Activated CD4-positive, alpha-beta T cell treated with anti-CD3 and anti-CD28 coated beads for 36 hours (primary cell): ENCODE measurements at regions of chr6 and their contacts with region 1.

Region 1: DNA sequence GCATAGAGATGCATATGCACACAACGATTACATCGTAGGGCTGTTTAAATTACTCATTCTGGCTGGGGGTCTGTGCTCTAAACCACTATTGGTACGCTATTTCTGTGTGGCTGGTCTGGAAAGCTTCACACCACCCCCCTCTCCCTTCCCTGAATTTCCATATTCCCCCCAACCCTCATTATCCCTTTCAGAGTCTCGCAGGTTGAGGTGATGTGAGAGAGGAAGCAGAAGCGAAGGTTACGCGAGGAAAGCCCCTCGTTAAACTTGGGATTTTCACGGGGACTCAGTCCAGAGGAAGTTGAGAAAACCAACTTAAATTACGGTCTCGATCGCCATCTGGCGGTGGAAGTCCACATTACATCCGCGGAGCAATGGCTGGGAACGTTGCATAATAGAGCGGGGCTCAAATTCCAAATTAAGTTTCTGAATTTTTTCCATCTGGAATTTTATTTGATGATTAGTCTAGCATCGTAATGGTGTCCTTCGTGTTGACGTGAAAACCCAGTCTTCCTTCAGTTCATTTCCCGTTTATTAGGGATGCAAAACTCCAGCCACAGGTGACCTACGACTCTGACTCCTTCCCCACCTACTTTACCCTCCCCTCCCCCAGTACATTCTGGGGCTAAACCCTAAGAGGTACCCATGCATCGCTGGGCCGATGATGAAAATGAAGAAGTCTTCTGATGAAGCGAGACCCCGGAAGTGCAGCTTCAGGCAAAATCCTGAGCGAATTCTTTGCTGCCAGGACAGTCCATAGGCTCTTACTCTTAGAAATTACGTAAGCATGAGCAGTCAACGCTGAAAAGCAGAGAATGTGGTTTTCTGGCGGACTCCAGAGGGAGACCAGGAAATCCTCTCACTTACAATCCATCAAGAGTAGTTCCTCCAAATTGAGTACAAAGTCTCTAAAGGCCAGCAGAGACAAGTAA is 19.7 kb downstream of the HLA-DOB start:
- DNase-seq: peak; percentile 87
- ATAC-seq: peak; percentile 68
- H3K4me3 Mint-ChIP-seq: peak overlapping the region; percentile 54
- H3K27ac Mint-ChIP-seq: peak overlapping the region; percentile 43
- H3K4me1 Mint-ChIP-seq: peaks cover 22% of the 10 kb centered on the region
- H3K27me3 Mint-ChIP-seq: peaks cover 27% of the 10 kb centered on the region

Region 2: DNA sequence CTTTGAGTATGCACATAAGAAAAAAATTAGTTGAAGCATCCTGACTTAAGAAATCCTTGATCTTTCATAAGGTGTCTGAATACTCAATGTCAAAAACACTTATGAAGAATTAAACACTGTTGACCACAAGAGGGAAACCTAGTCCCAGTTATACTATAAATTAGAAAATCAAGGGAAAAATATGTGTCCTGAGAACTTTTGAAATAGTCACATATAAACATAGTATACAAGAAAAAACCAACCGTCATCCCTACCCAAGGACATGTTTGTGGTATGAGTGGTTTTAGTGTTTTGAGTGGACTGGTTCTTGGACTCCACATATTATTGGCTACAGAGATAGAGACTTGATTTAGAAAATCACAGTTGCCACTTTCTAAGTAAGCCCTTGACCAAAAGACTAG is 365.1 kb before region 1 on chr6:
- CTCF ChIA-PET with region 1: interaction called, 4 read pairs
- POLR2A ChIA-PET with region 1: no interaction called
- intact Hi-C with region 1: loop called in 1 of 2 experiments (anchors 5 kb)
- DNase-seq: no peak
- ATAC-seq: no peak
- H3K4me3 Mint-ChIP-seq: no peak overlapping the region
- H3K27ac Mint-ChIP-seq: no peak overlapping the region
- H3K4me1 Mint-ChIP-seq: no peaks in the 10 kb centered on the region
- H3K27me3 Mint-ChIP-seq: peaks cover 12% of the 10 kb centered on the region

Region 3: DNA sequence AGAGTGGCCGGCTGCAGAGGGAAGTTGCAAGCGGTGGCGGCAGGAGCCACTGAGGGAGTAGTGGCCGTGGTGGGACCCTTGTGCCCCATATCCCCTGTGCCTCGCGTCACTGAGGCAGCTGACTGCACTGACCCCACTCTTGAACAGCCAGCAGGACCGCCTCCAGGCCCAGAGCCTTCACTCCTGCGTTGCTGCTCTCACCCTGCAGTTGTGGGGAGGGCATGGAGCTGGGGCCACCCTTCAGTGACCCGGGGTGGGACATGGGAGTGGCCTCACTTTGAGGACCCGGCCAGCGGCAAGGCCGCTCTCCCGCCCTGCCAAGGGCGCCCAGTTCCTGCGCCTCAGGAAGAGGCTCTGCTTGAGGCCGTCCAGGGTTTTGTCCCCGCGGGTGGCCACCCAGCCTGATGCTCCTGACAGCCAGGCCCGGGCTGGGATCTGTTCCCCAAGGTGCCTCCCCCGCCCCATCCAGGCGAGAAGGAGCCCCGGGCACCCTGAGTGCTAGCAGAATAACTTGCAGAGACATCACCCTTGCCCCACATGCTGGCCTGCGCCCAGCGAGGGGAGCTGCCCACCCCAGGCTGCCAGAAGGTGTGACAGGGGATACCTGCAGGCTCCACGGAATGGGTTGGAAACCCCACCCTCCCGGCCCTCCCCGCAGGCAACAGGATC is 313.0 kb before region 1 on chr6:
- CTCF ChIA-PET with region 1: no interaction called
- POLR2A ChIA-PET with region 1: no interaction called
- intact Hi-C with region 1: loop called in 1 of 2 experiments (anchors 1 kb)
- DNase-seq: no peak
- ATAC-seq: no peak
- H3K4me3 Mint-ChIP-seq: no peak overlapping the region
- H3K27ac Mint-ChIP-seq: no peak overlapping the region
- H3K4me1 Mint-ChIP-seq: no peaks in the 10 kb centered on the region
- H3K27me3 Mint-ChIP-seq: peaks cover 6% of the 10 kb centered on the region

Region 4: DNA sequence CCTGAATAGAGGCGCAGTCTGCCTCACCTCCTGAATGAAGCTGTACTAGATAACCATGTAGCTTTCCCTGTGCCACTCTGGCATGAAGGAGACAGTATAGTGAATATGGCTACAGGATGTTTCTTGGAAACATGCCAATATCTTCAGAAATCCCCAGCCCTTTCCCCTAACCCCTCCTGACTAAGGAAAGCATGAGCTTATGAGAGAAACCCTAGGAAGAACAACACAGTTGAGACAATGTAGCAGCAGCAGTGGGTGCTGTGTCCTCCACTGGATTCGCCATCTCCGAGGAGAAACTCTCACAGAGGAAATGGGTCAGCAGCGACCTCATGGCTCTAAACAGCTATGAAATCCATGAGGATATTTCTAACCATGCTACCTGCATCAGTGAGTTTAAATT is 153.2 kb before region 1 on chr6:
- CTCF ChIA-PET with region 1: no interaction called
- POLR2A ChIA-PET with region 1: no interaction called
- intact Hi-C with region 1: no loop called
- DNase-seq: no peak
- ATAC-seq: no peak
- H3K4me3 Mint-ChIP-seq: no peak overlapping the region
- H3K27ac Mint-ChIP-seq: no peak overlapping the region
- H3K4me1 Mint-ChIP-seq: peaks cover 8% of the 10 kb centered on the region
- H3K27me3 Mint-ChIP-seq: no peaks in the 10 kb centered on the region

Region 5: DNA sequence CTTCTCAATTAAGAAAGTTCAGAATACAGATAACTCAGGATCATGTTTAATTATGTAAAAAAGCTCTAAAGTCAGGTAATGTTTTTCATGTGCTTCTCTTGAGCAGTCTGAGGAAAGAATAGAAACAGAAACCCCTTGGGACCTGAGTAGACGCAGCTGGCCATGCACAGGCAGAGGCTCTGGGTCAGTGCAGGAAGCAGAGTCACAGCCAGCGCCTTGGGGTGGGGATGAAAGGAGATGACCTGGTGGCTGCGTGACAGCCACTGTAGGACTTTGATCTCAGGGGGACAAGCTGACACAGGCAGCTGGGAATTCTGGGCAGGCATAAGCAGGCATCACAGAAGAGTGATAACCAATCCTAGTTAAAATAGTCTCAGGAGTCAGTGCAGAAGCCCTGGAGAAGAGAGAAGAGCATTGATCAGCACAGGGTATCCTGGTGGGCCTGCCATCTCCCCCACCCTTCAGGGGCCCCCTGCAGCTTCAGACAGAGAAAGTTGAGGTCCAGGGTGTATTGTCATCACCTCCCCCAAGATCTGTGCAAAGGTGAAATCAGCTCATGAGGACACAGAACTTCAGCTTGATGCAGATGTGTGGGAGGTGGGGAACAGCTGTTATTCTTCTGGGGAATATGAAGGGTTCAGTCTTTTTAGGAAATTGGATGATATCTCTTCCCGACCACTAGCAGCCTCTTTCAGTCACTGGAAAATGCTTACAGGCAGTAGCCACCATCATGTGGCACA is 137.1 kb before region 1 on chr6:
- CTCF ChIA-PET with region 1: no interaction called
- POLR2A ChIA-PET with region 1: no interaction called
- intact Hi-C with region 1: no loop called
- DNase-seq: no peak
- ATAC-seq: no peak
- H3K4me3 Mint-ChIP-seq: no peak overlapping the region
- H3K27ac Mint-ChIP-seq: no peak overlapping the region
- H3K4me1 Mint-ChIP-seq: peaks cover 9% of the 10 kb centered on the region
- H3K27me3 Mint-ChIP-seq: peaks cover 4% of the 10 kb centered on the region

Region 6: DNA sequence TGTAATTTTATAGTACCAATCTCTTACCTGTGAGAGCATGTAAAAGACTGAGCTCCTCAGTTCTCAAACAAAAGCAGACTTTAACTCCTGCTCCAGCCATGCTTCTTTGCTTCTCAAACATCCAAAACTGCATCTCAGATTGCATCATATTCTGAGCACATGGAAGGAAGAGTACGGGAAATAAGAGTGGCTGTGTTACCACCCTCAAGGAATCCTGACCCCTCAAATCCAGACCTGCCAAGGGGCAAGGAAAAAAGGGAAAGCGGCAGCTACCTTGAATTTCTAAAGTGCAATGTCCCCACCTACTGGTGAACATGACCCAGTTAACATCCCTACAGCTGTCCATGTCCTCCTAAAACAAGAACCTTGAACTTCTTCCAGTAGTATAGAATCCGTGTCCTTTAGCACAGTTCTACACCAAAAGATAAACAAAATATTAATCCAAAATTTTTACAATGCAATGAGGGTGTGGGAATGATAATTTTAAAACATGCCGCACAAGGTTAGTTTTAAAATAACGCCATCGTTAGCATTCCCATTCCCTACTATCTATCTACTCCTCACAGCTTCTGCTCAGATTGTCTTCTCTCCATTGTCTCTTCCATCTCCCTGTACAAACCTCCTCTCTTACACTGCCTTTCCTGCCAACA is 96.6 kb before region 1 on chr6:
- CTCF ChIA-PET with region 1: interaction called, 4 read pairs
- POLR2A ChIA-PET with region 1: no interaction called
- intact Hi-C with region 1: loop called (anchors 1 to 5 kb)
- DNase-seq: peak; percentile 28
- ATAC-seq: peak; percentile 42
- H3K4me3 Mint-ChIP-seq: no peak overlapping the region
- H3K27ac Mint-ChIP-seq: no peak overlapping the region
- H3K4me1 Mint-ChIP-seq: no peaks in the 10 kb centered on the region
- H3K27me3 Mint-ChIP-seq: peaks cover 29% of the 10 kb centered on the region

Region 7: DNA sequence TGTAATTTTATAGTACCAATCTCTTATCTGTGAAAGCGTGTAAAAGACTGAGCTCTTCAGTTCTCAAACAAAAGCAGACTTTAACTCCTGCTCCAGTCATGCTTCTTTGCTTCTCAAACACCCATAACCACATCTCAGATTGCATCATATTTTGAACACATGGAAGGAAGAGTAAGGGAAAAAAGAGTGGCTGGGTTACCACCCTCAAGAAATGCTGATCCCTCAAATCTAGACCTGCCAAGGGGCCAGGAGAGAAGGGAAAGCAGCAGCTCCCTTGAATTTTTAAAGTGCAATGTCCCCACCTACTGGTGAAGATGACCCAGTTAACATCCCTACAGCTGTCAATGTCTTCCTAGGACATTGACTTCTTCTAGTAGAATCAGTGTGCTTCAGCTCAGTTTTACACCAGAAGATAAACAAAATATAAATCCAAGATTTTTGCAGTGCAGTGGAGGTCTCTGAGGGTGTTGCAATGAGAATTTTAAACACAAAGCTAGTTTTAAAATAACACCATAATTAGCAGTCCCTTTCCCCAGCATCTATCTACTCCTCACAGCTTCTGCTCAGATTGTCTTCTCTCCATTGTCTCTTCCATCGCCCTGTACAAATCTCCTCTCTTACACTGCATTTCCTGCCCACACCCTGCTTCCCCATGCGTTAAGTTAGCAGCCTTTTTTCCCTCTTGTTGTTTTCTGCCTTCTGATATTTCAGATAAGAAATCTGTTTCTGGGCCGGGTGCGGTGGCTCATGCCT is 11.2 kb before region 1 on chr6:
- CTCF ChIA-PET with region 1: interaction called, 17 read pairs
- POLR2A ChIA-PET with region 1: no interaction called
- intact Hi-C with region 1: no loop called
- DNase-seq: peak; percentile 45
- ATAC-seq: peak; percentile 78
- H3K4me3 Mint-ChIP-seq: no peak overlapping the region
- H3K27ac Mint-ChIP-seq: no peak overlapping the region
- H3K4me1 Mint-ChIP-seq: no peaks in the 10 kb centered on the region
- H3K27me3 Mint-ChIP-seq: peaks cover 25% of the 10 kb centered on the region

Region 8: GRCh38 chr6:33914645-33915044 is 1117.5 kb after region 1 on chr6:
- CTCF ChIA-PET with region 1: no interaction called
- POLR2A ChIA-PET with region 1: no interaction called
- intact Hi-C with region 1: no loop called
- DNase-seq: peak; percentile 65
- ATAC-seq: peak; percentile 84
- H3K4me3 Mint-ChIP-seq: no peak overlapping the region
- H3K27ac Mint-ChIP-seq: no peak overlapping the region
- H3K4me1 Mint-ChIP-seq: peaks cover 17% of the 10 kb centered on the region
- H3K27me3 Mint-ChIP-seq: no peaks in the 10 kb centered on the region